Dendritic cell treated with granulocyte-macrophage colony-stimulating factor and Interleukin-4, amounts not matched to agents 40 ng/mL and 50 ng/mL, for 4 days (primary cell): ENCODE measurements at regions of chr7 and their contacts with region 1.

Region 1: DNA sequence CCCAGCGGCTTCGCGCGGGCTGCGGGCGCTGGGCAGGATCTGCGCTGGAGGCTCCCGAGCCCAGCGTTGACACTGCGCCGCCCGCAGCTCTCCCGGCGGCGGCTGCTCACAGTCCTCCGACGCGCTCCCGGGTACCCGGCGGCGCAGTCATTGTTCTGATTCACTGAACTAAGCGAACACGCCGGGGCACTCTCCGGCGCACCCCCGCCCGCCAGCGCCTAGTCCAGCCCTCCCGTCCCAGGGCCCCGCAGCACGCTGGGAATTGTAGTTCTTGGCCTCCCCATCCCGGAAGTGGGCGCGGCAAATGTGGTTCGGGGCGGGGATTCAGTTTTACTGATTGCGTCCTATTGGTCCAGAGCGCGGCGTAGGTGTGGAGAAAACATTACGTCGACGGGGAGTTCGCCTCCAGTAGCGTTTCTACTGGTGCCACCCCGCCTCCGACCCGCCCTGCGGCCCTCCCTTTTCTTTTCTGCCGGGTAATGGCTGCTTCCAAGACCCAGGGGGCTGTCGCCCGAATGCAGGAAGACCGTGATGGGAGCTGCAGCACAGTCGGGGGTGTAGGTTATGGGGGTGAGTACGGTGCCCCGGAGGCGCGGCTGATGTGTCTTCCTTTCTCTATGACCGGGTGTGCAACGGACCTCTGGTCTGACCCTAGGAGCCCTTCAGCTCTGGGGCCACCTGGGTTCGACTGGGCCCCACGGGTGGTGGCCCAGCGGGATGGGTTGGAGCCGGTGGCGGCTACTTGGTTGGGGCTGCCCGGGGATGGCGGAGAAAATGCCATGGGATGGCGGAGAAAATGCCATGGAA is at the starts of genes DOCK4 and ZNF277:
- H3K4me3 Mint-ChIP-seq: peak within 1 kb of the TSS; percentile 87
- H3K27ac Mint-ChIP-seq: peak within 1 kb of the TSS; percentile 97
- H3K4me1 Mint-ChIP-seq: peaks cover 40% of the 10 kb centered on the region
- H3K27me3 Mint-ChIP-seq: no peaks in the 10 kb centered on the region

Region 2: GRCh38 chr7:111561885-111562732 is 644.3 kb before region 1 on chr7 and contains the start of gene IMMP2L:
- intact Hi-C with region 1: loop called (anchors 5 kb)
- H3K4me3 Mint-ChIP-seq: peak within 1 kb of the TSS; percentile 81
- H3K27ac Mint-ChIP-seq: peak within 1 kb of the TSS; percentile 84
- H3K4me1 Mint-ChIP-seq: peaks cover 19% of the 10 kb centered on the region
- H3K27me3 Mint-ChIP-seq: peaks cover 8% of the 10 kb centered on the region

Region 3: GRCh38 chr7:111987115-111987826 is 219.2 kb before region 1 on chr7:
- intact Hi-C with region 1: loop called (anchors 5 kb)
- H3K4me3 Mint-ChIP-seq: peak overlapping the region; percentile 41
- H3K27ac Mint-ChIP-seq: peak overlapping the region; percentile 72
- H3K4me1 Mint-ChIP-seq: peaks cover 25% of the 10 kb centered on the region
- H3K27me3 Mint-ChIP-seq: no peaks in the 10 kb centered on the region

Region 4: DNA sequence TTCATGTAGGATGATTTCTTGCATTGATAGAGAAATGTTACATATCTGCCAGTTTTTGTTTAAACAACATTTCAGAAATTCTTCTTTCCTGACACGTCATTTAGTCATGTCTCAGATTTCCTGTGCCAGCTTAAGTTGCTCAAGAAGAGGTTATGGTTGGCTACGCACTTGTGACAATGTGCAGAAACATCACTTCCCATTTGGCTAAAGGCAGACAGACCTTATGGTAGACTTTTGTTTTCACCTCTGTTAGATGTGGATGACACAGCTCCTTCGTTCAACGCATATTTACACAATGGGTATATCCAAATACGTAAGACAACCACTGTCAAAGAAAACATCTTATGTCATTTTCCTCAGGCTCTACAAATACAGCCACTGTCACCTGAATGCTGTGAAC is 126.0 kb before region 1 on chr7:
- intact Hi-C with region 1: loop called (anchors 2 kb)
- H3K4me3 Mint-ChIP-seq: peak overlapping the region; percentile 68
- H3K27ac Mint-ChIP-seq: peak overlapping the region; percentile 92
- H3K4me1 Mint-ChIP-seq: peaks cover 36% of the 10 kb centered on the region
- H3K27me3 Mint-ChIP-seq: no peaks in the 10 kb centered on the region

Region 5: DNA sequence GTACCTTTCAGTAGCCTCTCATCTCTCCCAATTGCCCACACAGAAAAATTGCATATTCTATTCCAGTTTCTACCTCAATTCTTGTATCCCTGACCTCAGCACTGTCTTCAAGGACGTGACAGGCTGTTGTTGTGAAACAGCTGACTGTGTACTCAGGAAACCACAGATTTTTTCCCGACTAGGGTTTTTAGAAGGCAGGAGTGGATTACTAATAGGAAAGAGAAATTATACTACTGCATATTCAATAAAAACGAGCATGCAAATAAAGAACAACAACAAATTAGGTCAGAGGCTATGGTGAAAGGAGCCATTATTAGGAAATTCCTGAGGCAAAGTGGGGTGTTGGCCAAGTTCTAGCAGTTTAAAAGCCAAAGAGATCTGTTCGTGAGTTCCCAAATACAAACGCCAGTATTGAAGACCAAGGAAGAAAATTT is 93.6 kb before region 1 on chr7:
- intact Hi-C with region 1: loop called (anchors 2 kb)
- H3K4me3 Mint-ChIP-seq: peak overlapping the region; percentile 65
- H3K27ac Mint-ChIP-seq: peak overlapping the region; percentile 90
- H3K4me1 Mint-ChIP-seq: peaks cover 45% of the 10 kb centered on the region
- H3K27me3 Mint-ChIP-seq: no peaks in the 10 kb centered on the region

Region 6: DNA sequence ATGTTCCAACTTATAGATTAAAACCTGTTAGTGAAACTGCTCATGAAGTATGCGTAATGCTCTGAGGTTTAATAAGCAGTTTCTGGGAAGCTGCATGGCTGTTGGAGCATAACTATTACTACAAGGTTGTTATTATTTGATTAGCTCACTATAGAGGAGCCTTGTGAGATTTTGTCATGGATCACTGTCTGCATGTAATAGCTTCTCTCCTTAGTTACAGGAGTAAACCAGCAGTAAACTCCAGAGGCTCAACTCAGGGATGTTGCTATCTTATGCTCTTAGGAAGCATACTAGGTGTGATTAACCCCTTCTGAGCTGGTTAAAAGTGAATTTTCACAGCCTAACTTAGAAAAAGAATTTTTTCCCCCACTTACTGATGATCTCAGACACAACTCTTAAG is 180.2 kb after region 1 on chr7:
- intact Hi-C with region 1: loop called (anchors 5 kb)
- H3K4me3 Mint-ChIP-seq: no peak overlapping the region
- H3K27ac Mint-ChIP-seq: no peak overlapping the region
- H3K4me1 Mint-ChIP-seq: peaks cover 8% of the 10 kb centered on the region
- H3K27me3 Mint-ChIP-seq: peaks cover 7% of the 10 kb centered on the region

Region 7: GRCh38 chr7:112449902-112450806 is 243.7 kb after region 1 on chr7 and contains the start of gene IFRD1:
- intact Hi-C with region 1: loop called (anchors 2 kb)
- H3K4me3 Mint-ChIP-seq: peak within 1 kb of the TSS; percentile 93
- H3K27ac Mint-ChIP-seq: peak within 1 kb of the TSS; percentile 99
- H3K4me1 Mint-ChIP-seq: peaks cover 38% of the 10 kb centered on the region
- H3K27me3 Mint-ChIP-seq: no peaks in the 10 kb centered on the region